AG04450 (cell line): ENCODE measurements at regions of chr15 and their contacts with region 1.

Region 1: GRCh38 chr15:51162865-51163762 is 68.4 kb upstream of the TNFAIP8L3 start:
- DNase-seq: peak; percentile 30
- H3K4me3 ChIP-seq: peak overlapping the region; percentile 43
- H3K27ac ChIP-seq: no peak overlapping the region
- H3K27me3 ChIP-seq: peaks cover 15% of the 10 kb centered on the region
- CTCF ChIP-seq: peak; percentile 98

Region 2: DNA sequence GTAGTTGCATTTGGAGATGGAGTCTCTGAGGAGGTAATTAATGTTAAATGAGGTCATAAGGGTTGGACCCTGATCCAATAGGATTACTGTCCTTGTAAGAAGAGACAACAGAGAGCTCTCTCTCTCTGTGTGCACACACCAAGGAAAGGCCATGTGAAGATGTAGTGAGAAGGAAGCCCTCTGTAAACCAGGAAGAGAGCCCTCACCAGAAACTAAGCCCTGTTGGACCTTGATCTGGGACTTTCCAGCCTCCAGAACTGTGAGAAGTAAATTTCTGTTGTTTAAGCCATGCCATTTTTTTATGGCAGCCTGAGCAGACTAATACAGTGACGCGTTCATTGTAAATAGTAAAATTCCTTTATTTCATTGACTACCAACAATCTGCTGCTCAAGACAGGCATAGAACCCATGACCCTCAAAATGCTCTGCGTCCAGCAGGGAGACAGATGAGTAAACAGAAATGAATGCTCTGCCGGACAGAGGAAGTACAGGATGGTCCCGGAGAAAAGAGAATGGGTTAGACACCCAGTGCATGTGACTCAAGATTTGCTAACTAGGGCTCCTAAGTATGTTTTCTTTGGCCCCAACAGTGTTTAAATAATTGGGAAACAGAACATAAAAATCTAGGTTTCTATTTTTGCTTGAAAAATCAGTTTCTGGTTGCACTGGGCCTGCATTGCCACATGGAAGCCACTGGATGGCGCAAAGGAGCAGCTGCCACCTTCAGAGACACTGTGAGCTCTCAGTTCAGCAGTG is 30.6 kb before region 1 on chr15:
- CTCF ChIA-PET with region 1: interaction called, 34 read pairs
- POLR2A ChIA-PET with region 1: no interaction called
- DNase-seq: peak; percentile 81
- H3K4me3 ChIP-seq: no peak overlapping the region
- H3K27ac ChIP-seq: peak overlapping the region; percentile 80
- H3K27me3 ChIP-seq: no peaks in the 10 kb centered on the region
- CTCF ChIP-seq: peak; percentile 98

Region 3: GRCh38 chr15:51185213-51186159 is 22.4 kb after region 1 on chr15:
- CTCF ChIA-PET with region 1: interaction called, 42 read pairs
- POLR2A ChIA-PET with region 1: no interaction called
- DNase-seq: no peak
- H3K4me3 ChIP-seq: no peak overlapping the region
- H3K27ac ChIP-seq: no peak overlapping the region
- H3K27me3 ChIP-seq: peaks cover 41% of the 10 kb centered on the region
- CTCF ChIP-seq: no peak

Region 4: GRCh38 chr15:51203797-51204196 is 40.7 kb after region 1 on chr15:
- CTCF ChIA-PET with region 1: interaction called, 196 read pairs
- POLR2A ChIA-PET with region 1: no interaction called
- DNase-seq: peak; percentile 21
- H3K4me3 ChIP-seq: no peak overlapping the region
- H3K27ac ChIP-seq: no peak overlapping the region
- H3K27me3 ChIP-seq: peaks cover 12% of the 10 kb centered on the region
- CTCF ChIP-seq: no peak

Region 5: GRCh38 chr15:51267703-51268083 is 104.6 kb after region 1 on chr15:
- CTCF ChIA-PET with region 1: interaction called, 12 read pairs
- POLR2A ChIA-PET with region 1: no interaction called
- DNase-seq: no peak
- H3K4me3 ChIP-seq: peak overlapping the region; percentile 57
- H3K27ac ChIP-seq: no peak overlapping the region
- H3K27me3 ChIP-seq: peaks cover 61% of the 10 kb centered on the region
- CTCF ChIP-seq: no peak

Region 6: DNA sequence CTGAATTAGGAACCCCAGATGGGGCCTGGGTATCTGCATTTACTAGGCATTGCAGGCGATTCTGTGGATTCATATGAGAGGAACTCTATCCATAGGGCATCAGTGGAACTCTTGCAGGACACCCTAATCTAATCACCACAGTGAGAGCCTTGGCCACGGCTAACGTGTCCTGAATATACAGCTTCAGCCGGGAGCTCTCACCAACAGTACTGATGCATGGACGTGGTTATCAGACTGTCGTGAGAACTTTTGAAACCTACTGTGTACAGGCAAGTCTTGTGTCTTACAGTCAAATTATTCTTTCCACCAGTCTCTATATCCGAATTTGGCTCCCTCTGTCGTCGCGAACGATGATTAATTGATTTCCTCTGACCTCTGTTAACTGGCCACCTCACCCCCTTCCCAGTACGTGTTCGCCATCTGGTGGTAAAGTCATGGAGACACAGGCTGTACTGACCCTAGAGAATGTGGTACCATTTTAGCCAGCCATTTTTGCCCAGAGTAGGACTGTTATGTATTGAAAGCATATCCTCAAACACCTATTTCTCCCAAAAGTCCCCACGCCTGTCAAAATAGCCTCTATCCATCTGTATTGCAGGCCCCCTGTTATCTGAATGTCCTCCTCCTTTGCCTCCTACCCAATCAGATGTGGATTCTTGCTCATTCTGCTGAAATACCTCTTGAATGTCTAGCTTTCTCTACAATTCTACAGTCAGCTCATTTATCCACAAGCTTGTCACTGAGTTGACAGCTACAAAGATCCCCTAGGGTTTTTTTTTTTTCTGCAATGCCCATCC is 218.1 kb after region 1 on chr15:
- CTCF ChIA-PET with region 1: interaction called, 137 read pairs
- POLR2A ChIA-PET with region 1: interaction called, 5 read pairs
- DNase-seq: peak; percentile 11
- H3K4me3 ChIP-seq: no peak overlapping the region
- H3K27ac ChIP-seq: no peak overlapping the region
- H3K27me3 ChIP-seq: peaks cover 18% of the 10 kb centered on the region
- CTCF ChIP-seq: peak; percentile 96

Region 7: GRCh38 chr15:51499379-51499976 is 336.4 kb after region 1 on chr15:
- CTCF ChIA-PET with region 1: interaction called, 22 read pairs
- POLR2A ChIA-PET with region 1: no interaction called
- DNase-seq: peak; percentile 15
- H3K4me3 ChIP-seq: no peak overlapping the region
- H3K27ac ChIP-seq: no peak overlapping the region
- H3K27me3 ChIP-seq: no peaks in the 10 kb centered on the region
- CTCF ChIP-seq: peak; percentile 74